ENCODE measurements at regions of chr10 and their contacts with region 1.

Region 1: GRCh38 chr10:50508315-50509051 is 115.3 kb downstream of the SGMS1 start:
- DNase-seq: peak; percentile 62
- CTCF ChIP-seq: no peak

Region 2: DNA sequence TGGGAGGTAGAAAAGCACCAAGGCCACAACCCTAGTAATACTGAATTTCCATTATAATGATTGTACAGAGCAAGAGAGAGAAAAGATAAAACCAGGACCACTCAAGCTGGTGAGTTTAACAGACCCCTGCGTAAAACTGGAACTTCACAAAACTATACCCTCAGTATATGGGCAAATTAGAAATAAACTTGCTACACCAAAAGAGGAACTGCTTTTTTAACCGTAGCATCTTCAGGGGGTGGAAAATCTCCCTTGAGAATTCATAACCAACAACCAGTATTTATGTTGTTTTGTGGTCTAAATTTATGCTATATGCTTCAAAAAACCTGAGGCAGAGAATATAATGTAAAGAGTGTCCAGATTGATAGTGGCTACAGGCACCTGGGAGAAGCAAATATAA is 55.9 kb before region 1 on chr10:
- in situ Hi-C with region 1: loop called (anchors 10 kb)
- DNase-seq: peak; percentile 44
- CTCF ChIP-seq: no peak

Region 3: DNA sequence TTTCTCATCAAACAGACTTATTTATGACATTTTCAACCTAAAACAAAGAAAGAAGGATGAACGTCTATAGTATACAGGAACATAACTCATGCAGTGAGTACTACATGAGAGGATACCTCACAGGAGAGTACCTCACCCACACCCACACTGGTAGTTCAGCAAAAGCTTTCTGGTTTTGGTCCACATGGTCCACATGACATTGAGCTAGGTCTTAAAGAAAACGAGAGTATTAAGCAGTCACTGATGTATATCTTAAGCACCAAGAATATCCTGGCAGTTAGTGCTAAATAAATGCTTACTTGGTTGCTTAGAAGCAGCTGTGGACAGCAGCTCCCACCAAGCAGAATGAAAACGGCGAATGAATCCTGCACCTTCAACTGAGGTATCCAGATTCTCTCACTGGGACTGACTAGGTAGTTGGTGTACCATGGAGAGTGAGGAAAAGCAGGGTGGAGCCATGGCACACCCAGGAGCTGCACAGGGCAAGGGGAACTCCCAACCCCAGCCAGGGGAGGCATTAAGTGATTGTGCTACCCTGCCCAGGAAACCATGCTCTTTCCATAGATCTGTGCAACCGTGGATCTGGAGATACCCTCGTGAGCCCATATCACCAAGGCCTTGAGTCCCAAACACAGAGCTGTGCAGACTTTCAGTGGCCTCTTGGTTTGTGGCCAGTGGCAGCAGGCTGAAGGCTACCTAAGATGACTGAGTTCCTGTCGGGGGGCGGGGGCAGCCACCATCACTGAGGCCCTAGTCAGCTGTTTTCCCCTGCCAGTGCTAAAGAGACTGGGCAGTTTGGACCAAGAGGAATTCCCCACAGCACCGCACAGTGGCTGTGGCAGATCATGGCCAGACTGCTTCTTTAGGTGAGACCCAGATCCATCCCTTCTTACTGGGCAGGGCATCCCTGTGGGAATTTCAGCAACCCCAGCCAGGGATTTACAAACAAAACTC is 28.2 kb before region 1 on chr10:
- in situ Hi-C with region 1: no loop called
- DNase-seq: peak; percentile 38
- CTCF ChIP-seq: no peak

Measured in GM13976 (cell line).